Activated CD8-positive, alpha-beta T cell treated with anti-CD3 and anti-CD28 coated beads for 36 hours (primary cell): ENCODE measurements at regions of chr17 and their contacts with region 1.

Region 1: GRCh38 chr17:18280766-18281371 is 20.4 kb downstream of the MIEF2 start:
- DNase-seq: no peak
- ATAC-seq: no peak
- H3K4me3 Mint-ChIP-seq: no peak overlapping the region
- H3K27ac Mint-ChIP-seq: no peak overlapping the region
- H3K4me1 Mint-ChIP-seq: no peaks in the 10 kb centered on the region
- H3K27me3 Mint-ChIP-seq: no peaks in the 10 kb centered on the region
- CTCF ChIP-seq: no peak

Region 2: DNA sequence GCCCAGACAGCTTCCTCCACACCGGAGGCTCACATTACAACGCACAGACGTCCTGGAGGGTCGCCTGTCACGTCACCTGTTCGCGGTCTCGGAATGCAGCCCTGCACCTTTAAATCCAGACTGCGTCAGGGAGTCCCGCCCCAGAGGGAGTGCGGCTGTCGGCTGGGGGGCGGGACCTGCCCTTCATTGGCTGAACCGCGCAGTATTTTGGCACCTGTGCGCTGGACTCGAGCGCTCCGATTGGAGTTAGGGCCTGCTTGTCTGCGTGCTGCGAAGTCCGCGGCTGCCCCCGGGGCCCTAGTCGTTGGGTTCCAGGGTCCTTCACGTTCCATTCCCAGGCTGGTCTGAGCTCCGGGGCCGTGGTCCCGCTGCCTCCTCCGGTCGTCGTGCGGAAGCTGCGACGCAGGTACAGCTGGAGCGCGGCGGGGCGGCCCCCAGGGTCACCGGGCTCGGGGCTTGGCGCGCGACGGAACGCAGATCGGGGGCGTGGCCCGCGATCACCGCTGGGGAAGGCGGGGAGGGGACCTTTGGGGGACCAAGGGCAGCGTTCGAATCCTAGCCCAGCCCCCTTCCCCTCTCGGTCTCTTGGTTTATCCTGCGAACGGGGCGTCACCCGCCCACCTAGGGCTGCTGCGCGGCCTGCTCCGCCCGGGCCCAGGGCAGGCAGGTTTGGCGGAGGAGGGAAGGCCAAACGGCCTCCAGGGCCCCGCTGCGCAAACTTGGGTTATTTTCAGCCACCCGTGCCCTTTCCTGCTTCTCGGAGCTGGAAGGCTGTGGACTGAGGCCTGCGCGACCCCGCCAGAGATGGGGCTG is 20.3 kb before region 1 on chr17 and contains the start of gene MIEF2:
- CTCF ChIA-PET with region 1: no interaction called
- POLR2A ChIA-PET with region 1: interaction called, 13 read pairs
- intact Hi-C with region 1: no loop called
- DNase-seq: peak; percentile 97
- ATAC-seq: peak; percentile 90
- H3K4me3 Mint-ChIP-seq: peak within 1 kb of the TSS; percentile 79
- H3K27ac Mint-ChIP-seq: peak within 1 kb of the TSS; percentile 86
- H3K4me1 Mint-ChIP-seq: peaks cover 38% of the 10 kb centered on the region
- H3K27me3 Mint-ChIP-seq: no peaks in the 10 kb centered on the region
- CTCF ChIP-seq: no peak
- total RNA-seq, gene MIEF2: 5.5 to 6.2 TPM

Region 3: GRCh38 chr17:18323011-18323410 is 42.1 kb after region 1 on chr17:
- CTCF ChIA-PET with region 1: no interaction called
- POLR2A ChIA-PET with region 1: no interaction called
- intact Hi-C with region 1: no loop called
- DNase-seq: no peak
- ATAC-seq: no peak
- H3K4me3 Mint-ChIP-seq: no peak overlapping the region
- H3K27ac Mint-ChIP-seq: no peak overlapping the region
- H3K4me1 Mint-ChIP-seq: peaks cover 39% of the 10 kb centered on the region
- H3K27me3 Mint-ChIP-seq: no peaks in the 10 kb centered on the region
- CTCF ChIP-seq: no peak